MCF 10A (cell line): ENCODE measurements at regions of chr1 and their contacts with region 1.

Region 1: GRCh38 chr1:166838766-166839599 is at the start of gene POGK:
- DNase-seq: peak; percentile 95
- H3K4me3 Mint-ChIP-seq: peak within 1 kb of the TSS; percentile 90
- H3K27ac Mint-ChIP-seq: peak within 1 kb of the TSS; percentile 96
- H3K4me1 Mint-ChIP-seq: peaks cover 47% of the 10 kb centered on the region
- H3K27me3 Mint-ChIP-seq: no peaks in the 10 kb centered on the region
- CTCF ChIP-seq: no peak
- total RNA-seq, gene POGK: 55.9 and 71.8 TPM in 2 replicates

Region 2: GRCh38 chr1:166511761-166512160 is 327.2 kb before region 1 on chr1:
- CTCF ChIA-PET with region 1: no interaction called
- POLR2A ChIA-PET with region 1: interaction called, 11 read pairs
- intact Hi-C with region 1: no loop called
- DNase-seq: peak; percentile 98
- H3K4me3 Mint-ChIP-seq: no peak overlapping the region
- H3K27ac Mint-ChIP-seq: no peak overlapping the region
- H3K4me1 Mint-ChIP-seq: no peaks in the 10 kb centered on the region
- H3K27me3 Mint-ChIP-seq: no peaks in the 10 kb centered on the region
- CTCF ChIP-seq: no peak

Region 3: DNA sequence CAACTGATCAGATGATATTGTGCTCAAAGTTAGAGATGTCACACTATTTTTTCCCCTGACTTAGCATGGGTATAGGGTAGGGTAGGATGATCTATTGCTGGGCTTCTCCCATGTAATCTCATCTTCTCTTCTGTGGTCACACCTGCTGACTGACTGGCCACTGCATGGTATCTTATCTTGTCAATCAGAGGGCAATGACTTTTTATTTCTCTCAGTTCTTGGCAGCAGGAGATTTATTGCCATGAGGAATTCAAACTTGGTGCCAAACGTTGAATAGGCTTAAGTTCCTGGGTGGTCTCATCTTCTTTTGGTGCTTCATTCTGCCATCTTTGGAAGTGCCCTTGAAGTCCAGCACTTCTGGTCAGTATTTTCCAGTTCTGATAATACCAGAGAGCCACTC is 226.1 kb before region 1 on chr1:
- CTCF ChIA-PET with region 1: no interaction called
- POLR2A ChIA-PET with region 1: no interaction called
- intact Hi-C with region 1: no loop called
- DNase-seq: no peak
- H3K4me3 Mint-ChIP-seq: no peak overlapping the region
- H3K27ac Mint-ChIP-seq: no peak overlapping the region
- H3K4me1 Mint-ChIP-seq: no peaks in the 10 kb centered on the region
- H3K27me3 Mint-ChIP-seq: no peaks in the 10 kb centered on the region
- CTCF ChIP-seq: no peak

Region 4: GRCh38 chr1:166852925-166853324 is 13.9 kb after region 1 on chr1:
- CTCF ChIA-PET with region 1: interaction called, 12 read pairs
- POLR2A ChIA-PET with region 1: interaction called, 24 read pairs
- intact Hi-C with region 1: no loop called
- DNase-seq: no peak
- H3K4me3 Mint-ChIP-seq: no peak overlapping the region
- H3K27ac Mint-ChIP-seq: no peak overlapping the region
- H3K4me1 Mint-ChIP-seq: peaks cover 6% of the 10 kb centered on the region
- H3K27me3 Mint-ChIP-seq: no peaks in the 10 kb centered on the region
- CTCF ChIP-seq: no peak

Region 5: GRCh38 chr1:166865931-166866330 is 26.9 kb after region 1 on chr1:
- CTCF ChIA-PET with region 1: interaction called, 4 read pairs
- POLR2A ChIA-PET with region 1: interaction called, 10 read pairs
- intact Hi-C with region 1: no loop called
- DNase-seq: no peak
- H3K4me3 Mint-ChIP-seq: no peak overlapping the region
- H3K27ac Mint-ChIP-seq: no peak overlapping the region
- H3K4me1 Mint-ChIP-seq: peaks cover 25% of the 10 kb centered on the region
- H3K27me3 Mint-ChIP-seq: no peaks in the 10 kb centered on the region
- CTCF ChIP-seq: no peak

Region 6: GRCh38 chr1:166875734-166876539 is 37.0 kb after region 1 on chr1 and contains the start of gene TADA1:
- CTCF ChIA-PET with region 1: interaction called, 4 read pairs
- POLR2A ChIA-PET with region 1: interaction called, 46 read pairs
- intact Hi-C with region 1: loop called (anchors 2 kb)
- DNase-seq: peak; percentile 100
- H3K4me3 Mint-ChIP-seq: peak within 1 kb of the TSS; percentile 92
- H3K27ac Mint-ChIP-seq: peak within 1 kb of the TSS; percentile 95
- H3K4me1 Mint-ChIP-seq: peaks cover 38% of the 10 kb centered on the region
- H3K27me3 Mint-ChIP-seq: no peaks in the 10 kb centered on the region
- CTCF ChIP-seq: no peak
- total RNA-seq, gene TADA1: 14.7 and 15.9 TPM in 2 replicates